Right ventricle myocardium inferior (tissue), 1 donor: ENCODE measurements at regions of chr18 and their contacts with region 1.

Region 1: DNA sequence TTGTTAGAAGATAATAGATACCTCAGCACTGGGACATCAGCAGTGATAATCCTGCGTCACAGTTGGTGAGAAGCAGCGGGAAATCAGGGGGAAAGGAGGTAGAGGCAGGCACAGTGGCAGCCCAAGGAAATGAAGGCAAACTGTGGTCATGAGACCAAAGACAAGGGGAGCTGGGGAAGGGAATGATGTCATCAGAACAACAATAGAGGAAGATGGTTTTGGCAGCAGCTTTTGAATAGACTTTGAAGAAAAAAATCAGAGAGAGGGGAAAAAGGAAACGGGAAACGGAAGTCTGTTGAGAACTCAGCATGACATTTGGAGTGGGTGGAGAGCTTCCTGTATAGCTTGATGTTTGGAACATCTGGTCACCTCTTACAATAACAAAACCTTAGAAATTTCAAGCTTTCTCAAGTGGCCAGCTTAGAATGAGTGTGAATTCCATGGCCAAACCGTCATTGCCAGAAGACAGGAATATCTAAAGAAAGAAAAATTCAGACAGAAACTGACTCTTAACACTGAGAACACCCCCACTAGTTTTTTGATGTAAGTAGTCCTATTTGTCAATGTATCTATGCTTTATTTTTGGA is 18.4 kb upstream of the YES1 start:
- DNase-seq: no peak
- ATAC-seq: peak; percentile 55

Region 2: GRCh38 chr18:741931-742512 is 88.4 kb before region 1 on chr18:
- intact Hi-C with region 1: loop called (anchors 1 kb)
- DNase-seq: no peak
- ATAC-seq: peak; percentile 34

Region 3: GRCh38 chr18:877238-877637 is 46.8 kb after region 1 on chr18:
- intact Hi-C with region 1: no loop called
- DNase-seq: no peak
- ATAC-seq: no peak